PC-9 (cell line): ENCODE measurements at regions of chr6 and their contacts with region 1.

Region 1: GRCh38 chr6:44028789-44029310 is 98.4 kb downstream of the MRPL14 start:
- DNase-seq: peak; percentile 49 to 76
- H3K4me3 ChIP-seq: no peak overlapping the region
- H3K27ac ChIP-seq: peak overlapping the region; percentile 50
- H3K4me1 ChIP-seq: peaks cover 68% of the 10 kb centered on the region
- H3K27me3 ChIP-seq: no peaks in the 10 kb centered on the region
- CTCF ChIP-seq: peak; percentile 32; the same call in 1 of the 2 replicates

Region 2: DNA sequence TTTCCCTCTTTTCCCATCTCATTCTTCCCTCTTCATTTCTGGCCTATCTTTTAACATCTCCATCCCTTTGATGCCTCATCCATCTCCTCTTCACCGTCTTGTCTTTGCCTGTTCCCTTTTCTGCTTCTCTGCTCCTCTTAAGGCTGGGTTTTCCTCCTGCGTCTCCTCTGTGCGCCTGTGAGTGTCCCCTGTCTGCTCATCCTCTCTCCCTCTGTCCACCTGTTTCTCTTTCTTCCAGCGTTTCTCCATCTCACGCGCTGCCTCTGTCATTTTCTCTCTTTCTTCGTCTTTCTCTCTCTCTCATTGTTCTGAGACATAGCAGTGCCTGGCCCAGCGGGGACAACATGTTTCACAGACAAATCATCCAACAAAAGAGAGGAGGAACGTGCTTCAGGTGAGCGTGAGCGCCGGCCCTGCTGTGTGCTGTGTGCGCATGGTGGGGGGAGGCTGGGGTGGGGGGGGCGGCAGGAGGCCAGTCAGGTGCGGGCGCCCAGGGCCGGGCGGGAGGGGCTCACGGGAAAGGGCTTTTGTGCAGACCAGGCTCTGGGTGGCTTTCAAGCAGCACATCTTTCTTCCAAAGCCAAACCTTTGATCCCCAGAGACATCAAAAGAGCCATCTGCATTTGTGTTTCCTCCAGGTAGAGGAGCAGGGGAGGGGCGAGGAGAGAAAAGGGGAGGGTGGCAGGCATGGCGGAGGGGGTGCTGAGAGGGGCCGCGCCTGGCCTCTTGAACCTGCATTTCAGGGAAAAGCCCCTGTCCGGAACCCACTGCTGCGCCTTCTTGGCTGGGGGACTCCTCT is 137.6 kb before region 1 on chr6:
- CTCF ChIA-PET with region 1: no interaction called
- POLR2A ChIA-PET with region 1: interaction called, 23 read pairs
- intact Hi-C with region 1: no loop called
- DNase-seq: no peak
- H3K4me3 ChIP-seq: no peak overlapping the region
- H3K27ac ChIP-seq: no peak overlapping the region
- H3K4me1 ChIP-seq: peaks cover 14% of the 10 kb centered on the region
- H3K27me3 ChIP-seq: no peaks in the 10 kb centered on the region
- CTCF ChIP-seq: no peak